CD4-positive, alpha-beta T cell (primary cell): ENCODE measurements at regions of chr12 and their contacts with region 1.

Region 1: GRCh38 chr12:56137853-56138571 is 9.9 kb downstream of the ESYT1 start:
- DNase-seq: no peak
- ATAC-seq: peak; percentile 55
- H3K4me3 ChIP-seq: no peak overlapping the region
- H3K4me3 Mint-ChIP-seq: peak overlapping the region; percentile 39
- H3K27ac ChIP-seq: peak overlapping the region; percentile 34 to 60
- H3K27ac Mint-ChIP-seq: peak overlapping the region; percentile 78
- H3K4me1 ChIP-seq: peaks cover 78% of the 10 kb centered on the region
- H3K4me1 Mint-ChIP-seq: peaks cover 67% of the 10 kb centered on the region
- H3K27me3 ChIP-seq: no peaks in the 10 kb centered on the region
- H3K27me3 Mint-ChIP-seq: no peaks in the 10 kb centered on the region
- CTCF ChIP-seq: no peak

Region 2: DNA sequence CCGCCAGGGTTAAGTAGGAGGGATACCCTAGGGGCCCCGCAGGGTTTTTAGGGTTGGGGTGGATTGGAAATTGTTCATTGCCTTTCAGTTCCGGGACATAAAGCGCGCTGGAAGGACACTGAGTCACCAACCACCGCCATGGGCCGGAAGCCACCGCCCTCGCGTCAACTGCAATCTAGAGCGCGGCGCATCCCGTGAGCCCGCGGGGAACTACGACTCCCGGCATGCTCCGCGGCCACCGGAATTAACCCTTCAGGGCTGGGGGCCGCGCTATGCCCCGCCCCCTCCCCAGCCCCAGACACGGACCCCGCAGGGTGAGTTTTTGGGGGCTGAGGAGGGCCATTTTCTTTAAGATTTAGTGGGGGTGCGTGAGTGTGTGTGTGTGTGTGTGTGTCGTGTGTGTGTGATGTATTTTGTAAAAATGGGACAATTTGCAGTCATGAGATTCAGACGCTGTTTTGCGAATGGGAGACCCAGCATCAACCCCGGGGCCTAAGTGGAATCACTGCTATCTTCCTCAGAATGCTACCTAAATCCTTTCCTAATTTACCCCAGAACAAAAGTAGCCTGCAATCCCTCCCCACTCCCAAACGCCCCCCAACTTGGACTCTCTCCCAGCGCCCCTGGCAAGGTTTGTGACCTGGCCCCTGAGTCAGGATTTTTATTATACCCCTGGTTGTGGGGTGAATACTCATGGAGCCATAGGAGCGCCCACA is 14.5 kb after region 1 on chr12 and contains the start of gene MYL6B:
- CTCF ChIA-PET with region 1: interaction called, 8 read pairs
- POLR2A ChIA-PET with region 1: interaction called, 35 read pairs
- intact Hi-C with region 1: loop called in 1 of 2 experiments (anchors 2 kb)
- DNase-seq: peak; percentile 85 to 96 (median 91)
- ATAC-seq: peak; percentile 88
- H3K4me3 ChIP-seq: peak within 1 kb of the TSS; percentile 76
- H3K4me3 Mint-ChIP-seq: peak within 1 kb of the TSS; percentile 94
- H3K27ac ChIP-seq: peak within 1 kb of the TSS; percentile 75 to 87
- H3K27ac Mint-ChIP-seq: peak within 1 kb of the TSS; percentile 94
- H3K4me1 ChIP-seq: peaks cover 31% of the 10 kb centered on the region
- H3K4me1 Mint-ChIP-seq: peaks cover 29% of the 10 kb centered on the region
- H3K27me3 ChIP-seq: no peaks in the 10 kb centered on the region
- H3K27me3 Mint-ChIP-seq: no peaks in the 10 kb centered on the region
- CTCF ChIP-seq: no peak
- total RNA-seq, gene MYL6B: 6.2 to 6.4 TPM